MCF 10A (cell line): ENCODE measurements at regions of chr5 and their contacts with region 1.

Region 1: DNA sequence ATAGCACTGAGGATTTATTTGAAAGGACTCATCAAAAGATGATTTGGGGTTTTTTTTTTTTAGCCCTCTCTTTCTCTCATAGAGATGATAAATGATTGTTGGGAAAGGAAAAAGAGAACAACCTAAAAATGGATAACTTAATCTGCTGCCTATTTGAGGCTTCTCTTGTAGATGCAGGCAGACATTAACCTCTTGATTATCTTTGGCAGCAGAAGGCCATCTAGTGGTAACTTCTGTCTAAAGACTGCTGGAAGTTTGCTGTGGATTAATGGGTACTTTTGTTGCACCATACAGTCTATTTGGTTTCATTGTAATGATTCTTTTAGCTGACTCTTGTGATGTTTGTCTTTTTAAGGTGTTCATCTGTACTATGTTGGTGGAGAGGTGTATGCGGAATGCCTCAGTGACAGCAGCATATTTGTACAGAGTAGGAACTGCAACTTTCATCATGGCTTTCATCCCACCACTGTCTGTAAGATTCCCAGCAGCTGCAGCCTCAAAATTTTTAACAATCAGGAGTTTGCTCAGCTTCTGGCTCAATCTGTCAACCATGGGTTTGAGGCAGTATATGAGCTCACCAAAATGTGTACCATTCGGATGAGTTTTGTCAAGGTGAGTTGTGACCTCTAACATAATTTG is 18.8 kb downstream of the SMIM32 start:
- DNase-seq: peak; percentile 69
- H3K4me3 Mint-ChIP-seq: no peak overlapping the region
- H3K27ac Mint-ChIP-seq: no peak overlapping the region
- H3K4me1 Mint-ChIP-seq: peaks cover 4% of the 10 kb centered on the region
- H3K27me3 Mint-ChIP-seq: no peaks in the 10 kb centered on the region
- CTCF ChIP-seq: peak; percentile 91

Region 2: GRCh38 chr5:136053336-136054141 is 120.6 kb before region 1 on chr5:
- CTCF ChIA-PET with region 1: interaction called, 17 read pairs
- POLR2A ChIA-PET with region 1: interaction called, 5 read pairs
- intact Hi-C with region 1: loop called (anchors 2 kb)
- DNase-seq: peak; percentile 98
- H3K4me3 Mint-ChIP-seq: no peak overlapping the region
- H3K27ac Mint-ChIP-seq: peak overlapping the region; percentile 85
- H3K4me1 Mint-ChIP-seq: peaks cover 52% of the 10 kb centered on the region
- H3K27me3 Mint-ChIP-seq: no peaks in the 10 kb centered on the region
- CTCF ChIP-seq: no peak

Region 3: DNA sequence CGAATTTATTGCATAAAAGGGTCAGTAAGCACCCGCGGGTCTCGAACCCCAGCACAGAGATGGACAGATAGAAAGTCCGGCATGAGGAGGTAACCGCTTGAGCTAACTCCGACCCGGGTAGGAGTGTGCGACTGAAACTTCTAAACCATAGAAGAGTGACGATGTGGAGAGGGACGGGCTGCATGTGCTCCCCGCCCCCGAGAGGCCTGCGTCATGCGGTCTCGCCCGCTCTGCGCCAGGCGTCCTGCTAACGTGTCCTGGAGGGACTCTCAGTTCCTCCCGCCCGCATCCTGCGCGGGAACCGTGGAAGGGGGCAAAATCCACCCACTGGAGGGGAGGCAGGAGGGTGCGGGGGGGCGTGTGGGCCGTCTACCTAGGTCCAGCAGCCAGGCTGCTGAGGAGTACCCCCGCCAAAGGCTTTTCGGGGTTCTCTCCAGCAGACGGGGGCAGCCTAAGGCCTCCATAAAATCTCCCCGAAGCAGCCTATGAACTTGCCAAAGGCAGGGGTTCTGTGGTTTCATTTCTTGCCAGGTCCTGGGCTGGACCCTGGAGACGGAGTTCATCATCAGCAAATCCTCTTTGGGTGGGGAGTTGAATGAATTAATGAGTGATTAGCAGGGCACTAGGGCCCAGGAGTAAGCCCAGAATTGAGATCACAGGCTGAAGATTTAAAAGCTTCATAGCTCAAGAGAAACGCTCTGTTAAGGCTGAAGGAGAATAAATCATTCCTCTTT is 93.5 kb before region 1 on chr5:
- CTCF ChIA-PET with region 1: interaction called, 62 read pairs
- POLR2A ChIA-PET with region 1: interaction called, 4 read pairs
- intact Hi-C with region 1: loop called (anchors 1 kb)
- DNase-seq: no peak
- H3K4me3 Mint-ChIP-seq: no peak overlapping the region
- H3K27ac Mint-ChIP-seq: no peak overlapping the region
- H3K4me1 Mint-ChIP-seq: no peaks in the 10 kb centered on the region
- H3K27me3 Mint-ChIP-seq: no peaks in the 10 kb centered on the region
- CTCF ChIP-seq: no peak

Region 4: GRCh38 chr5:136132557-136133221 is 41.5 kb before region 1 on chr5 and contains the start of gene SMAD5:
- CTCF ChIA-PET with region 1: interaction called, 24 read pairs
- POLR2A ChIA-PET with region 1: interaction called, 3 read pairs
- intact Hi-C with region 1: loop called (anchors 2 kb)
- DNase-seq: peak; percentile 97
- H3K4me3 Mint-ChIP-seq: peak within 1 kb of the TSS; percentile 89
- H3K27ac Mint-ChIP-seq: peak within 1 kb of the TSS; percentile 97
- H3K4me1 Mint-ChIP-seq: peaks cover 22% of the 10 kb centered on the region
- H3K27me3 Mint-ChIP-seq: no peaks in the 10 kb centered on the region
- CTCF ChIP-seq: no peak
- total RNA-seq, gene SMAD5: 97.4 and 106 TPM in 2 replicates

Region 5: DNA sequence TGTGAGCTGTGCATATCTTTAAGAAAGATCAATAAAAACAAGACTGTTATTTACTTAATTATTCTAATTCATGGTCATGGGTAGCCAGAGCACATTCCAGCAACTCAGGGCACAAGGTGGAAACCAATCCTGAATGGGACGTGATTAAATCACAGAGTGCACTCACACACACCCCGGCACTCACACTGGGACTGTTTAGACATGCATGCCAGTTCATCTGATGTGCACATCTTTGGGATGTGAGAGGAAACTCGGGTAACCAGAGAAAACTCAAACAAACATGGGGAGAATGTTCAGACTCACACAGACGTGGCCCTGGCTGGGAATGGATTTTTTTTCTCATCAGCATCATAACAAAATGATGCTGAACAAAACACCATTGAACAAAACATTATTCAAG is 12.1 kb before region 1 on chr5:
- CTCF ChIA-PET with region 1: interaction called, 33 read pairs
- POLR2A ChIA-PET with region 1: interaction called, 3 read pairs
- intact Hi-C with region 1: no loop called
- DNase-seq: no peak
- H3K4me3 Mint-ChIP-seq: no peak overlapping the region
- H3K27ac Mint-ChIP-seq: no peak overlapping the region
- H3K4me1 Mint-ChIP-seq: peaks cover 6% of the 10 kb centered on the region
- H3K27me3 Mint-ChIP-seq: no peaks in the 10 kb centered on the region
- CTCF ChIP-seq: no peak

Region 6: DNA sequence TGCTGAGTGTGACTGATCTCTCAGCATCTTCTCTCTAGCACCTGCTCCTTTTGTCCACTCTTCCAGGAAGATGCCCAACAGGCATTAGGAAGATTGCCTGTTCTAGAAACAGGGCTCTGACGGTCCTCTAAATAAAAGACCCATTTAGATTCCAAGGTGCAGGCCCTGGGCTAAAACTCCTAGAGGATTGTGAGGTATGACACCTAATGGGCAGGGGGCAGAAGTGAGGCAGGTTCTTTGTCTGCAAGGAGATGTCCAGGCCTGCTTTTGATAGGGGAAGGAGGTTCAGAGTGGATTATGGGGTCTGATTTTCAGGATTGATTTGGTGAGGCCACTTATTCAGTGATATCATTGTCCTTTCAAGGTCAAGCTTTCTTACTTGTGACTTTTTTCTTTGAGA is 332.0 kb after region 1 on chr5:
- CTCF ChIA-PET with region 1: no interaction called
- POLR2A ChIA-PET with region 1: no interaction called
- intact Hi-C with region 1: no loop called
- DNase-seq: no peak
- H3K4me3 Mint-ChIP-seq: no peak overlapping the region
- H3K27ac Mint-ChIP-seq: no peak overlapping the region
- H3K4me1 Mint-ChIP-seq: no peaks in the 10 kb centered on the region
- H3K27me3 Mint-ChIP-seq: peaks cover 19% of the 10 kb centered on the region
- CTCF ChIP-seq: no peak